Esophagus muscularis mucosa (tissue), 4 donors: ENCODE measurements at regions of chr5 and their contacts with region 1.

Region 1: GRCh38 chr5:95646554-95647431 is at the start of gene RFESD:
- DNase-seq: peak; percentile 100
- H3K4me3 ChIP-seq: peak within 1 kb of the TSS; percentile 56 to 70 (median 64)
- H3K27ac ChIP-seq: peak within 1 kb of the TSS; percentile 93 to 97 (median 96)
- H3K4me1 ChIP-seq: peaks cover 10 to 20% (median 18%) of the 10 kb centered on the region in 4 donors
- H3K27me3 ChIP-seq: no peaks in the 10 kb centered on the region
- CTCF ChIP-seq: peak in 1 of 3 experiments; percentile 13
- EP300 ChIP-seq: peak; percentile 99
- POLR2A ChIP-seq: peak; percentile 93
- total RNA-seq, gene RFESD: 0.63 to 1.7 (median 0.84) TPM

Region 2: DNA sequence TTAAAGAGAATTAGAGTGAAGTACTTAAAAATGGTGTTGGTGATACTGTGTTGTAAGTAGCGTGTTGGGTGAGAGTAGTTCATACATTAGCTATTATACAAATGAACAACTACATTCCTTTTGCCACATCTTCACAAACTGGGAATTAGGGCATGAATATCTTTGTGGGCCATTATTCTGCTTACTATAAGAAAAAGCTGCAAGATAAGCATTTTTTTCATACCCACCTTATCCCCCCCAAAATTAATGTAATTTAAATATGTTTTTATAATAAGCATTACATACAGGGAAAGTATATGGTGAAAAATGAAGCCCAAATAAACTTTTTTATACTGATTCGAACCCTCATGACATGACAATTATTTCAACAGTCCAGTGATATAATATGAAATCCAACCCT is 186.1 kb before region 1 on chr5:
- intact Hi-C with region 1: no loop called
- DNase-seq: no peak
- H3K4me3 ChIP-seq: no peak overlapping the region
- H3K27ac ChIP-seq: no peak overlapping the region
- H3K4me1 ChIP-seq: no peaks in the 10 kb centered on the region
- H3K27me3 ChIP-seq: no peaks in the 10 kb centered on the region
- CTCF ChIP-seq: no peak
- EP300 ChIP-seq: no peak
- POLR2A ChIP-seq: no peak

Region 3: GRCh38 chr5:95730730-95731570 is 84.2 kb after region 1 on chr5 and contains the start of gene RHOBTB3:
- intact Hi-C with region 1: loop called (anchors 5 kb)
- DNase-seq: peak; percentile 98
- H3K4me3 ChIP-seq: peak within 1 kb of the TSS; percentile 72 to 92 (median 76)
- H3K27ac ChIP-seq: peak within 1 kb of the TSS; percentile 93 to 99 (median 96)
- H3K4me1 ChIP-seq: peaks cover 36 to 81% (median 67%) of the 10 kb centered on the region in 4 donors
- H3K27me3 ChIP-seq: no peaks in the 10 kb centered on the region
- CTCF ChIP-seq: no peak
- EP300 ChIP-seq: no peak
- POLR2A ChIP-seq: peak; percentile 57
- total RNA-seq, gene RHOBTB3: 72.9 to 165 (median 89.2) TPM

Region 4: GRCh38 chr5:95781101-95781583 is 134.3 kb after region 1 on chr5:
- intact Hi-C with region 1: loop called (anchors 5 kb)
- DNase-seq: peak; percentile 95
- H3K4me3 ChIP-seq: no peak overlapping the region
- H3K27ac ChIP-seq: peak overlapping the region; percentile 46 to 65 (median 59)
- H3K4me1 ChIP-seq: peaks cover 13 to 40% (median 24%) of the 10 kb centered on the region in 4 donors
- H3K27me3 ChIP-seq: no peaks in the 10 kb centered on the region
- CTCF ChIP-seq: peak; percentile 85 to 93 (median 85)
- EP300 ChIP-seq: no peak
- POLR2A ChIP-seq: no peak

Region 5: DNA sequence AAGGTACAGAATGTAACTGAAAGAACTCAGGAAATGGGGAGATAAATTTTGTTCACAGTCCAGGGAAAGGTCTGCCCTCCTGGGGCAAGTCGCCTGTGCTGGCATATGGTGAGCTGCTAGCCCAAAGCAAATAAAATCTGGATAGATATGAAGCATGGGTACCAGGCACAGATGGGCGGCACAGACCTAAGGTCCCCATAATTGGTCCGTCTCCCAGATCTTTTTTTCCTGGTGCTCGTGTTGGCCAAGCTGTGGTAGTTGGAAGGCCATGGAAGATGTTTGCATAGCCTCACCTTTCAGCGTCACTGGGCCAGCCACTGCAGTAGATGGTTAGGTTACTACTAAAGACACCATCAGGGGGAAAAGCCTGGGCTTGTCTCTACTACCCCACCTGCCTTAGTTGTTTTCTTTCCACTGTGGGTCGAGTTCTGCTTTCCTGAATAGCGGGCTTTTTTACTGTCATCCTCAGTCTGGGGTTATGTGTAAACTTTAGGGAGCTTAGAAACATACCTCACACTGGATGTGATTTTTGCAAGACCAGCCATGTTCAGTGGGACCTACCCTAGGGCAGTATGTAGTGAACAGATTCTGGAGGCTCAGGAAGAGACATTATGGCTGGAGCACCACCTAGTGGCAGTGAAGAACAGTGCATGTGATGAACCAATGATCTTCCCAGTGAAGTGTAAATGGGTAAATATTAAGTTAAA is 199.9 kb after region 1 on chr5:
- intact Hi-C with region 1: loop called (anchors 2 kb)
- DNase-seq: no peak
- H3K4me3 ChIP-seq: no peak overlapping the region
- H3K27ac ChIP-seq: no peak overlapping the region
- H3K4me1 ChIP-seq: peaks cover 3 to 16% (median 13%) of the 10 kb centered on the region in 4 donors
- H3K27me3 ChIP-seq: no peaks in the 10 kb centered on the region
- CTCF ChIP-seq: peak; percentile 93 to 96 (median 93)
- EP300 ChIP-seq: no peak
- POLR2A ChIP-seq: no peak

Region 6: DNA sequence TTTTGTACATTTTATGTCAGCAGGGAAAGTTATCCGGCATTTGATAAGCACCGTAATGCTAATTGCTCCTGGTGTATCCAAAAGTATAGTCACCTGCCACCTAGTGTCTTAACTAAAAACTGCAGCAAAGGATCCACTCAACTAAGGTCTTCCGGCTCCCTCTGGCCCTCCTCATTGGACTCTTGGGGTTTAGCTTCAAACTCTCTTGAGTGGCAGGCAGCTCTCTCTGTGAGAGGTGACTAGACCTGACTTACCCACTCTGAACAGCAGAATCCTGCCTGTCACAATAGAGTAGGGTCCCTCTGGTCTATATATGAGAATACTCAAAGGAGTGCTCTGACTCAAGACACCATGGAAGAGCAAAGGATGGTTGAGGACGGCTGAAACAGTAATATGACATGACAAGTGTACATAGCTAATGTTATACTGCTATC is 955.0 kb after region 1 on chr5:
- intact Hi-C with region 1: loop called (anchors 5 kb)
- DNase-seq: no peak
- H3K4me3 ChIP-seq: no peak overlapping the region
- H3K27ac ChIP-seq: no peak overlapping the region
- H3K4me1 ChIP-seq: peaks cover 0 to 5% (median 0%) of the 10 kb centered on the region in 4 donors
- H3K27me3 ChIP-seq: no peaks in the 10 kb centered on the region
- CTCF ChIP-seq: peak; percentile 81 to 88 (median 83)
- EP300 ChIP-seq: no peak
- POLR2A ChIP-seq: no peak